ENCODE measurements at regions of chr10 and their contacts with region 1.

Region 1: DNA sequence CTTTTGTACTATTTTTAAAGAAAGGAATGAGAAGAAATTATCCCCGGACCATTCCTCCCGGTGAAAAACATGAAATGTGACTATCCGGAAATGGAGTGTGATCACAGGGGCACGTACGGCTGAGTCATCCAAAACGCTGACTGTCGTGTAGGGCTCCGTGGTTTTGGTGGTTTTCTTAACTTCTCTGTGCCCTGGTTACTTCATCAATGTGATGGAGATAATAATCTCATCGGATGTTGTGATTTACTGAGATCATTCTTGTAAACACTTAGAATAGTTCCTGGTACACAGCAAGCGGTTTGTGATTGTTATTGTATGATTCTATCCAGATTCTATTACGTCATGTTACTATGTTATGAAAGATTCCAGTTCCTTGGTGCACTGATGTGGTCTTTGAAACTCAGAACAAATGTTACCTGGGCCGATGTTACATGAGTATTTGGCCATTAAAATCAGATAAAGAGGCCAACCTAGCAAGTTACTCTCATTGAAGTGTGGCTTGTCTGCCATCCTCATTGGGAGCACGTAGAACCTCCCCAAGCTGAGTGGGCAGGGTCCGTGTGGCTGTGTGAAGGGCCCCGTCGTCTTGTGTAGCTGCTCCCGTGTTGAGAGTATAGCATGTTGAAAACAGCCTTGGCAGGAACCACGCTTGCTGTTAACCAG is 99.5 kb downstream of the CAMK1D start:
- DNase-seq: peak; percentile 94
- H3K4me3 Mint-ChIP-seq: peak overlapping the region; percentile 74
- H3K27ac Mint-ChIP-seq: peak overlapping the region; percentile 88
- H3K4me1 Mint-ChIP-seq: peaks cover 27% of the 10 kb centered on the region
- H3K27me3 Mint-ChIP-seq: peaks cover 36% of the 10 kb centered on the region

Region 2: DNA sequence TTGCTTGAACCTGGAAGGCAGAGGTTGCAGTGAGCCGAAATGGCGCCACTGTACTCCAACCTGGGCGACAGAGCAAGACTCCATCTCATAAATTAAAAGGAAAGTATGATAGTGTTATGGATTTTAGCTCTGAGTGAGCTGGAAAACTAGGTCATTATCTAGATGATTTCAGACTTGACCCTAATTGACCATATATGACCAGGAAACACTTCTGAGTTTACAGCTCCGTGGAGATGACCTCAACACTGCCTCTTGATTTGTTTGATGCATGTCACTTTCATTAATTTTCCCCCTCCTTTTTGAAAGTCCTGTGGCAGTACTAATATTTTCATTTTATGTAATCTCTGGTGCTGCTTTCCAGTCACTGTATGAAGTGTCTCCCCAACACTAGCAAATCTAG is 327.2 kb before region 1 on chr10:
- intact Hi-C with region 1: loop called (anchors 2 kb)
- DNase-seq: no peak
- H3K4me3 Mint-ChIP-seq: peak overlapping the region; percentile 79
- H3K27ac Mint-ChIP-seq: peak overlapping the region; percentile 97
- H3K4me1 Mint-ChIP-seq: peaks cover 27% of the 10 kb centered on the region
- H3K27me3 Mint-ChIP-seq: no peaks in the 10 kb centered on the region

Region 3: DNA sequence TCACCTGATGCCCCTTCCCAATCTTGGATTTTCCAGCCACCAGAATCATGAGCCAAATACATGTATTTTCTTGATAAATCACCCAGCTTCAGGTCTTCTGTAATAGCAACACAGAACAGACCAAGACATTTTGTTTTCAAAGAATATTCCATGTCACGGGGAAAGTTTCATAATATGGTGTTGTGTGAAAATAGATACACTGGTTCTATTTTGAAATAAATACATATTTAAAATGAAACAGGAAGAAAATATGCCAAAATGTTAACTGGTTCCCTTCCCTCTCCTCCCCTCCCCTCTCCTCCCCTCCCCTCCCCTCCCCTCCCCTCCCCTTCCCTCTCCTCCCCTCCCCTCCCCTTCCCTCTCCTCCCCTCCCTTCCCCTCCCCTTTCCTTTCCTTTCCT is 129.8 kb before region 1 on chr10:
- intact Hi-C with region 1: no loop called
- DNase-seq: no peak
- H3K4me3 Mint-ChIP-seq: no peak overlapping the region
- H3K27ac Mint-ChIP-seq: no peak overlapping the region
- H3K4me1 Mint-ChIP-seq: peaks cover 2% of the 10 kb centered on the region
- H3K27me3 Mint-ChIP-seq: peaks cover 2% of the 10 kb centered on the region

Region 4: GRCh38 chr10:12348870-12349628 is 99.8 kb before region 1 on chr10 and contains the start of gene CAMK1D:
- intact Hi-C with region 1: loop called (anchors 1 kb)
- DNase-seq: peak; percentile 95
- H3K4me3 Mint-ChIP-seq: peak within 1 kb of the TSS; percentile 90
- H3K27ac Mint-ChIP-seq: peak within 1 kb of the TSS; percentile 97
- H3K4me1 Mint-ChIP-seq: peaks cover 34% of the 10 kb centered on the region
- H3K27me3 Mint-ChIP-seq: peaks cover 53% of the 10 kb centered on the region
- total RNA-seq, gene CAMK1D: 5.6 and 6.6 TPM in 2 replicates

Region 5: DNA sequence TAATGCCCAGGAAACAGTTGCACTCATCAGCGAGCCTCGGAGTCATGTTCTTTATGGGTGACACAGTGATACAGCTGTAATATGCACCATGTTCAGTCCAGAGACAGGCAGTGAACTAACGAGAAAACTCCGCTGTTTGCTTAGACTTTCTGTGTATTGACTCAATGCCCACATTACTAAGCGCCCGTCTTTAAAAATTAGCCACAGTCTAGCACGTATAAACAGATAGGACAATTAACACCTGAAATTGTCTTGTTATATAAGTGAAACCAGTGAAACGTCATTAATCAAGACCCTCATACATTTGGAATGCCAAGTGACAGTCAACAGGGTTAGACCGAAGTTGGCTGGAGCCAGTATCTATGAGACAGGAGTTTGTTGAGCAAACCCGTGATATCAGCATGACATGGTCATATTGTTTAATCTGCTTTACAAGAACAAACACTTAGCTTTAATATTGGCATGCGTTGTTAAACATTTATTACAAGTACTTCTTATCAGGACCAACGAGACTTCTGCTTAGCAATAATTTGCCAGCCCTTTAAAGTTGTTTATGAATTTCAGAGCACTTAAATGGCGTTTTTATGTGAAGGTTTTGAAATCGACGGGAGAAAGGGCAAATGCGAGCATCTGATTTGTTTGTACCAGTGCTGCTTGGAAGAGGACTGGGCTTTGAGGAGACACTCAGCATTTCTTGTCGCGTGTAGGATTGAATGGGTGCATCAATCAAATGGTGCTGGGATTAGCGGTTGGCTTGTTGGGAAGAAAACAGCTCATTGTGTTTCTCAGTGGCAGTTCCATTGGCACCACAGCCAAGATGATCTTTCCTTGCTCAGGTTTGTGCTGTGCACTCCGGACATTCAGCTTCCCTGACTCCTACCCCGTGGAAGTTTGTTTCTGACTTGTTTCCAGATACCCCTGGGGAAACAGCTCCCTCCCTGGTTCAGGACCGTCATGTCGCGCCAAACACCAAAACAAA is 43.2 kb before region 1 on chr10:
- intact Hi-C with region 1: loop called (anchors 2 kb)
- DNase-seq: no peak
- H3K4me3 Mint-ChIP-seq: no peak overlapping the region
- H3K27ac Mint-ChIP-seq: no peak overlapping the region
- H3K4me1 Mint-ChIP-seq: peaks cover 24% of the 10 kb centered on the region
- H3K27me3 Mint-ChIP-seq: peaks cover 3% of the 10 kb centered on the region

Region 6: DNA sequence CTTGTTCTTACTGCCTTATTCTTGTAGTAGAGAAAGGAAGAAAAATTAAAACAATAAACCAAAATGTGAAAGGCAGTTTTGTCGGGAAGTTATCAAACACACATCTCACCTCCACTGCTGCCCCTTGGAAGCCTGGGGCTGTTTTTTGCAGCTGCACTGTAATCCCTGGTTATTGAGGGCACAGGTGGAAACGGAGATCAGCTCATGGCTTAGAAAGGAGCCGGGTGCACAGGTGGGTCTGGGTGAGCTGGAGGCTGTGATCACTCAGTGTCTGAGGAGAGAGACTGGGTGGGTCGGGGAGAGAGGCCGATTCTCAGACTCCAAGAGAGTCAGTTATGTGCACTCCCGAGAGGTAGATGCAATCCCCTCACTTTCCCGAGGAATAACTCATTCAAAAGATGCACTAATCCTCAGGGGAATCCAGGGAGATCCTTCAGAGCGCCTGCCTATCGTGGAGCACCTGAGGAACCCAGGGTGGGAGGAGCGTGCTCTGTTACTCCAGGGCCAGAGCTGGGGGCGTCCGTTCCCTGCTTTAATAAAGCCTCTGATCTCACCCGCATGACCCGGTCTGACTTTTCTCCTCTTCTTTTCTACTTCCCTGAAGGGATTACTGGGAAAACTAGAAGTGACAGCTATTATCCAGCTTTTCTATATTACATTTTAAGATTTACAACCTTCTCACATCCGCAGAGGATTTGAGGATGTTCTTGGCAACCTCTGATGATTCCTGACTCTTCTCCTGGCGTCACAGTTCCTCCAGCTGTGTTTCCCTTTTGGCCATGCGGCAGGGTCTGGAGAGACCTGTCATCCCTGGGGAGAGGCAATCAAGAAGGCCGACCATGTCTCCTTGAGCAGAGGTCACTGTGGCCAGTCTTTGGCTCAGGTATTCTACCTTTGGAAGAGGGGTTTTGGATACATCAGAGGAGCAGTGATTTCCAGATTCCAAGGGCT is 17.4 kb before region 1 on chr10:
- intact Hi-C with region 1: no loop called
- DNase-seq: no peak
- H3K4me3 Mint-ChIP-seq: no peak overlapping the region
- H3K27ac Mint-ChIP-seq: no peak overlapping the region
- H3K4me1 Mint-ChIP-seq: no peaks in the 10 kb centered on the region
- H3K27me3 Mint-ChIP-seq: peaks cover 10% of the 10 kb centered on the region

Region 7: GRCh38 chr10:12594448-12594944 is 145.6 kb after region 1 on chr10:
- intact Hi-C with region 1: loop called (anchors 2 kb)
- DNase-seq: peak; percentile 87
- H3K4me3 Mint-ChIP-seq: peak overlapping the region; percentile 61
- H3K27ac Mint-ChIP-seq: peak overlapping the region; percentile 88
- H3K4me1 Mint-ChIP-seq: peaks cover 80% of the 10 kb centered on the region
- H3K27me3 Mint-ChIP-seq: no peaks in the 10 kb centered on the region

Region 8: GRCh38 chr10:12656518-12657142 is 207.8 kb after region 1 on chr10:
- intact Hi-C with region 1: loop called (anchors 5 kb)
- DNase-seq: peak; percentile 78
- H3K4me3 Mint-ChIP-seq: no peak overlapping the region
- H3K27ac Mint-ChIP-seq: peak overlapping the region; percentile 62
- H3K4me1 Mint-ChIP-seq: peaks cover 26% of the 10 kb centered on the region
- H3K27me3 Mint-ChIP-seq: no peaks in the 10 kb centered on the region

Region 9: DNA sequence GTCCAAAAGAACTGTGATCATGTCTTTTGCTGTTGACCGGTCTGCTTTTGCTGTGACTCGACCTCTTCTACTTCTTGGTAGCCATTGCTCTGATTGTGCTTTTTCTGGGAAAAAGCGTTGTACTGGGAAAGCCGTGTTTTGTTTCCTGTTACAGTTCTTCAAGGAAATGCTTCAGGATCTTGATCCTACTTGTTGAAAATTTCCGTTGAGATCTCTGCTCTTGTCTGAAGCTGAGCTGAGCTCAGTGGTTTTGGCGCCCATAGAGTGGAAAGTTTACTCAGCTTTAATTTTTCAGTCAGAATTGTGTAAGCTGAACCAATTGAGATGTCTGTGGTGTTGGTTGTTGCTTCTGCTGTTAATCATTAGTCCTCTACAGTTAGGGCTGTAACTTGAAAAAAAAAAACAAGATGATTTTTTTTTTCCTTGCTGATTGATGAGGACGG is 250.4 kb after region 1 on chr10:
- intact Hi-C with region 1: no loop called
- DNase-seq: peak; percentile 72
- H3K4me3 Mint-ChIP-seq: peak overlapping the region; percentile 24
- H3K27ac Mint-ChIP-seq: peak overlapping the region; percentile 87
- H3K4me1 Mint-ChIP-seq: peaks cover 20% of the 10 kb centered on the region
- H3K27me3 Mint-ChIP-seq: no peaks in the 10 kb centered on the region

Measured in activated CD4-positive, alpha-beta T cell treated with anti-CD3 and anti-CD28 coated beads, Interleukin-2, amount 10 ng/mL, durations not matched to agents 24 days and 14 days (primary cell).